Common myeloid progenitor, CD34-positive (primary cell): ENCODE measurements at regions of chr3 and their contacts with region 1.

Region 1: DNA sequence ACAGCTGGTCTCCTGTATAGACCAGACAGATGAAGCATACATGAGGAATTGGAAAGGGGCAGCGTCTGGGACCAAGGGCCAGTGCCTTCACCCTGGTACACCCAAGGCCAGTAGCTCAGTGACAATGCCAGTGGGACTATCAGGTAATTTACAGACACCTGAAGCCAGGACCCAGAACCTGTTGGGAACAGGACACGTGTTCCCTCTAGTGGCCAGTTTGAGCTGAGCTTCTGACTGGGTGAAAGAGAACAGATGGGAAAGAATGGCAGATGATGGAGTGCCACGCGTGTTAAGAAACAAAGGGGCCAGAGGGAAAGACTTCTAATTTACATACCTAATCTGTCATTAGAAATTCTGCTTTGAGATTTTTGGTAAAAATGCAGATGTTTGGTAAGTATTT is 5.1 kb upstream of the SLC25A38 start:
- DNase-seq: peak in 2 of 3 donors; percentile 66 to 68
- H3K4me3 ChIP-seq: no peak overlapping the region
- H3K27ac ChIP-seq: no peak overlapping the region
- H3K4me1 ChIP-seq: peaks cover 0 to 21% (median 8%) of the 10 kb centered on the region in 4 experiments
- H3K27me3 ChIP-seq: no peaks in the 10 kb centered on the region

Region 2: DNA sequence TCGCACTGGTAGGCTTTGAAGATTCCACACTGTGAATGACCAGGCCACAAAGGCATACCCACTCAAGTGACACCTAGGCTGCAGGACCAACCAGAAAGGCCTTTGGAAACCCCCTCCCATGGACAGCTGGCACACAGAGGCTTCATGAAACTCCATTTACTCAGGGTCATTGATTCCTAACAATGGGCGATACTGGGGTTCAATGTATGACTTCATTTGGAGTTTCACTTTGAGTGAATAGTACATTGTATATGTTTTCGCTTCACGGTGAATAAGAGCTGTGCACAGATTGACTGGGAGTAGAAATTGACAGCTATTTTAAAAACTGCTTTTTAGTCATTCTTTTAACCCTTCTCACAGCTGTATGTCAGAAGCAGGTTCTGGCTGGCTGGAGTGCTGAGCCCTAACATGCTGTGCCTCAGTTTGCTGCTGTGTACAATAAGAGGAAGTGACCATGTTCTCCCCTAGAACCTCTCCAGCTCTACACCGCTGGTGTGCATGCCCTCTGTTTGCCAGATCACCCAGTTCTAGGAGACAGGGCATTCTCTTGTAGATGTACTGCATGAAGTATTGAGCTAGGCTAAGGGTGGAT is 82.8 kb before region 1 on chr3:
- CTCF ChIA-PET with region 1: interaction called, 41 read pairs
- POLR2A ChIA-PET with region 1: no interaction called
- DNase-seq: no peak
- H3K4me3 ChIP-seq: no peak overlapping the region
- H3K27ac ChIP-seq: no peak overlapping the region
- H3K4me1 ChIP-seq: peaks cover 0 to 8% (median 0%) of the 10 kb centered on the region in 4 experiments
- H3K27me3 ChIP-seq: no peaks in the 10 kb centered on the region

Region 3: DNA sequence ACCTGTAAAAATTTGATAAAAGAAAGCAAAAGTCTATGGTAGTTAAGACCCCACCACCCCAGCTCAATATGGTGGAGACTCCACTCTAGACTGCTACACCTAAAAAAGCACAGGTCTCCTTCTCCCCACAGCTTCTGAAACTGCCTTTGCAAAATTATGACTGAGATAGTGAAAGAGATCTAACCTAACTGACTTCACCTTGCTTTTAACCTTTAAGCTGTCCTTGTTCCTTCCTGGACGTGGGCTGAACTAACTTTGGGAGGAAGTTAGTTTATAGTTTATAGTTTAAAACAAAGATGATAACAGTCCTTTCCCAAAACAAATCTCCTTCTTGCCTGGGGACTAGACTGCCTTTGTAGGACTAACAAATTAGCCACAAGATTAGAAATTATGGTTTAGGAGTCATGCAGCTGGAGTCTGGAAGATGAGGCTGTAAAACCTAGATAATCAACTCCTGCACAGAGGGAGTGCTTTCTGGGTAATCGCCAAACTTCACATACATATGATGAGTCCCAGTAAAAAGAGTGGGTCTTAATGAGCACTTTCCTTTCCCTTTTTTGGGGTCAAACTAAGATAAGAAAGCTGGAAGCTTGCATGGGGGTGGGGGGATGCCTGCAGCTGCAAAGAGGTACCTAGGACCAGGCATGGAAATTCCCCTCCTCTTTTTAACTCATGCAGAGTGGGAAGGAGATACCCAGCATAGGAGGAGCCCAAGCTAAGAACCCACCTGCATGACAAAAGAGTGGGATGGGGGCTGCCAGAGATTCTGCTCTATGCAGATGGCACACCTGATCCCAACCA is 31.1 kb before region 1 on chr3:
- CTCF ChIA-PET with region 1: interaction called, 13 read pairs
- POLR2A ChIA-PET with region 1: no interaction called
- DNase-seq: peak in 1 of 3 donors; percentile 35
- H3K4me3 ChIP-seq: no peak overlapping the region
- H3K27ac ChIP-seq: no peak overlapping the region
- H3K4me1 ChIP-seq: peaks cover 3 to 57% (median 19%) of the 10 kb centered on the region in 4 experiments
- H3K27me3 ChIP-seq: no peaks in the 10 kb centered on the region

Region 4: GRCh38 chr3:39414421-39414907 is 36.4 kb after region 1 on chr3:
- CTCF ChIA-PET with region 1: no interaction called
- POLR2A ChIA-PET with region 1: no interaction called
- DNase-seq: no peak
- H3K4me3 ChIP-seq: no peak overlapping the region
- H3K27ac ChIP-seq: no peak overlapping the region
- H3K4me1 ChIP-seq: peaks cover 0 to 11% (median 9%) of the 10 kb centered on the region in 4 experiments
- H3K27me3 ChIP-seq: no peaks in the 10 kb centered on the region

Region 5: GRCh38 chr3:39434574-39434973 is 56.5 kb after region 1 on chr3:
- CTCF ChIA-PET with region 1: no interaction called
- POLR2A ChIA-PET with region 1: no interaction called
- DNase-seq: peak in 1 of 3 donors; percentile 24
- H3K4me3 ChIP-seq: no peak overlapping the region
- H3K27ac ChIP-seq: no peak overlapping the region
- H3K4me1 ChIP-seq: no peaks in the 10 kb centered on the region
- H3K27me3 ChIP-seq: no peaks in the 10 kb centered on the region

Region 6: DNA sequence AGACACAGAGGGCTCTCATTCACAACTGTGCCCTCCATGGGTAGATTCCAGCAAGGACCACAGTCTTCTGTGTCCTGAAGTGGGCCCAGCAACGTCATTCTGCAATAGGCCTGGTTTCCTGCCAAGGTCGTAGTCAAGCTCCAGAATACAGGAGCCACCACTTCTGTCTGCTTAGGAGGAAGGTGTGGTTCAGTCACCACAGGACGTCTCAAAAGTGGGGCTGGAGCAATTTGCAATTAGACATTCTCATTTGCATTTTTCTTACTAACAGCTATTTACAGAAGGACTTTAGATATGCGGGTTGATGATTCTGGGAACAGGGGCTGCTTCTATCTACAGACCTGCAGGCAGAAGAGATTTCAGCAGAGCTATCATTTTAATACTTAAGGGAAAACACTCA is 372.6 kb after region 1 on chr3:
- CTCF ChIA-PET with region 1: no interaction called
- POLR2A ChIA-PET with region 1: no interaction called
- DNase-seq: peak in 2 of 3 donors; percentile 43 to 58
- H3K4me3 ChIP-seq: no peak overlapping the region
- H3K27ac ChIP-seq: no peak overlapping the region
- H3K4me1 ChIP-seq: peaks cover 5 to 16% (median 9%) of the 10 kb centered on the region in 4 experiments
- H3K27me3 ChIP-seq: peaks cover 0 to 2% (median 0%) of the 10 kb centered on the region in 5 experiments